HepG2 (cell line): ENCODE measurements at regions of chr20 and their contacts with region 1.

Region 1: GRCh38 chr20:53216856-53217576 is 244.9 kb downstream of the TSHZ2 start:
- DNase-seq: peak; percentile 50
- ATAC-seq: peak; percentile 100
- H3K4me3 ChIP-seq: no peak overlapping the region
- H3K27ac ChIP-seq: no peak overlapping the region
- H3K4me1 ChIP-seq: no peaks in the 10 kb centered on the region
- H3K27me3 ChIP-seq: peaks cover 0 to 11% of the 10 kb centered on the region in 2 experiments; a peak in 2 of 5 replicates
- CTCF ChIP-seq: peak; percentile 99
- EP300 ChIP-seq: no peak
- POLR2A ChIP-seq: no peak
- RAD21 ChIP-seq: peak; percentile 98

Region 2: GRCh38 chr20:52242237-52243230 is 974.5 kb before region 1 on chr20:
- CTCF ChIA-PET with region 1: no interaction called
- POLR2A ChIA-PET with region 1: no interaction called
- in situ Hi-C with region 1: no loop called
- intact Hi-C with region 1: loop called (anchors 5 kb)
- DNase-seq: no peak
- ATAC-seq: no peak
- H3K4me3 ChIP-seq: no peak overlapping the region
- H3K27ac ChIP-seq: no peak overlapping the region
- H3K4me1 ChIP-seq: peaks cover 4% of the 10 kb centered on the region; the same call in 1 of the 2 replicates
- H3K27me3 ChIP-seq: no peaks in the 10 kb centered on the region; a peak in 1 of 5 replicates
- CTCF ChIP-seq: peak; percentile 45
- EP300 ChIP-seq: no peak
- POLR2A ChIP-seq: no peak
- RAD21 ChIP-seq: no peak

Region 3: DNA sequence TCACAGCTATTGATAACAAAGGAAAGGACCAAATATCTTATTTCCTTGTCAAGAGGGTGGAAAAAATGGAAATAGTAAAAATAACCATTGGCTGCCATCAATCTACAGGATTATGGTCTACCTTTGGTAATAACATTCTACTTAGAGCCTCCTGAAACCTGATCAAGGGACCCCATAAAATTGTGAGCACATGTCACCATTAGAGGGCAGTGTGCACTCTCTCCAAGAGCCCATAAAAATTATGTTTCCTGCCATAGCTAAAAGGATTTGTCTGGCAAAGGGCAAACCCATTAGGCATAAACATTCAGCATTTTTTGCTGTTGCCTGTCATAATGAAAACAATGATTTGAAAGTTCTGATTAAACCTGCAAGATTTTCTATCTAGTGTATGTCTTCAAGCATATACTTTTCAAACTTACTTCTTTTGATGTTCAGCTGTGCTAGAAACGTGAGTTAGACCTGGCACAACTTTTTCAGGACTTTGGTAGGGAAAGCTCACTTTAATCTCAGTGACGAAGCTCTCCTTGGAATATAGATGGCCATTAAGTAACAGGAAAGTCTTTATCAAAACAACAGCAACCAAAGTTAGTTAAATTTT is 904.8 kb before region 1 on chr20:
- CTCF ChIA-PET with region 1: interaction called, 20 read pairs
- POLR2A ChIA-PET with region 1: no interaction called
- in situ Hi-C with region 1: loop called (anchors 10 kb)
- intact Hi-C with region 1: loop called (anchors 1 kb)
- DNase-seq: peak; percentile 70
- ATAC-seq: peak; percentile 81
- H3K4me3 ChIP-seq: no peak overlapping the region
- H3K27ac ChIP-seq: no peak overlapping the region
- H3K4me1 ChIP-seq: peaks cover 10% of the 10 kb centered on the region; the same call in 1 of the 2 replicates
- H3K27me3 ChIP-seq: peaks cover 5 to 12% of the 10 kb centered on the region in 2 experiments; a peak in 3 of 5 replicates
- CTCF ChIP-seq: peak; percentile 82
- EP300 ChIP-seq: no peak
- POLR2A ChIP-seq: no peak
- RAD21 ChIP-seq: peak; percentile 53; the same call in 1 of the 2 replicates

Region 4: GRCh38 chr20:52747845-52748284 is 469.2 kb before region 1 on chr20:
- CTCF ChIA-PET with region 1: interaction called, 19 read pairs
- POLR2A ChIA-PET with region 1: no interaction called
- in situ Hi-C with region 1: loop called (anchors 5 kb)
- intact Hi-C with region 1: loop called (anchors 1 kb)
- DNase-seq: peak; percentile 37
- ATAC-seq: peak; percentile 97
- H3K4me3 ChIP-seq: no peak overlapping the region
- H3K27ac ChIP-seq: no peak overlapping the region
- H3K4me1 ChIP-seq: no peaks in the 10 kb centered on the region
- H3K27me3 ChIP-seq: no peaks in the 10 kb centered on the region
- CTCF ChIP-seq: peak; percentile 82
- EP300 ChIP-seq: no peak
- POLR2A ChIP-seq: no peak
- RAD21 ChIP-seq: peak; percentile 71

Region 5: GRCh38 chr20:52943185-52943841 is 273.7 kb before region 1 on chr20:
- CTCF ChIA-PET with region 1: interaction called, 6 read pairs
- POLR2A ChIA-PET with region 1: no interaction called
- in situ Hi-C with region 1: no loop called
- intact Hi-C with region 1: loop called (anchors 10 kb)
- DNase-seq: peak; percentile 31
- ATAC-seq: peak; percentile 40; the same call in 1 of the 3 replicates
- H3K4me3 ChIP-seq: no peak overlapping the region
- H3K27ac ChIP-seq: no peak overlapping the region
- H3K4me1 ChIP-seq: no peaks in the 10 kb centered on the region
- H3K27me3 ChIP-seq: no peaks in the 10 kb centered on the region
- CTCF ChIP-seq: no peak
- EP300 ChIP-seq: no peak
- POLR2A ChIP-seq: no peak
- RAD21 ChIP-seq: no peak

Region 6: GRCh38 chr20:53021934-53022333 is 195.1 kb before region 1 on chr20:
- CTCF ChIA-PET with region 1: interaction called, 4 read pairs
- POLR2A ChIA-PET with region 1: no interaction called
- in situ Hi-C with region 1: no loop called
- intact Hi-C with region 1: loop called (anchors 1 kb)
- DNase-seq: no peak
- ATAC-seq: no peak
- H3K4me3 ChIP-seq: no peak overlapping the region
- H3K27ac ChIP-seq: no peak overlapping the region
- H3K4me1 ChIP-seq: no peaks in the 10 kb centered on the region
- H3K27me3 ChIP-seq: no peaks in the 10 kb centered on the region
- CTCF ChIP-seq: no peak
- EP300 ChIP-seq: no peak
- POLR2A ChIP-seq: no peak
- RAD21 ChIP-seq: no peak

Region 7: GRCh38 chr20:53547664-53548239 is 330.7 kb after region 1 on chr20:
- CTCF ChIA-PET with region 1: interaction called, 3 read pairs
- POLR2A ChIA-PET with region 1: no interaction called
- in situ Hi-C with region 1: loop called (anchors 25 kb)
- intact Hi-C with region 1: loop called (anchors 5 kb)
- DNase-seq: peak; percentile 84
- ATAC-seq: peak; percentile 58
- H3K4me3 ChIP-seq: no peak overlapping the region
- H3K27ac ChIP-seq: no peak overlapping the region
- H3K4me1 ChIP-seq: peaks cover 51% of the 10 kb centered on the region
- H3K27me3 ChIP-seq: no peaks in the 10 kb centered on the region
- CTCF ChIP-seq: peak; percentile 96
- EP300 ChIP-seq: 0 out of 4 replicates have a peak, but pooled peaks of 1 of the 2 experiments have one; percentile 30
- POLR2A ChIP-seq: no peak
- RAD21 ChIP-seq: peak; percentile 98